AG04449 (cell line): ENCODE measurements at regions of chr14 and their contacts with region 1.

Region 1: DNA sequence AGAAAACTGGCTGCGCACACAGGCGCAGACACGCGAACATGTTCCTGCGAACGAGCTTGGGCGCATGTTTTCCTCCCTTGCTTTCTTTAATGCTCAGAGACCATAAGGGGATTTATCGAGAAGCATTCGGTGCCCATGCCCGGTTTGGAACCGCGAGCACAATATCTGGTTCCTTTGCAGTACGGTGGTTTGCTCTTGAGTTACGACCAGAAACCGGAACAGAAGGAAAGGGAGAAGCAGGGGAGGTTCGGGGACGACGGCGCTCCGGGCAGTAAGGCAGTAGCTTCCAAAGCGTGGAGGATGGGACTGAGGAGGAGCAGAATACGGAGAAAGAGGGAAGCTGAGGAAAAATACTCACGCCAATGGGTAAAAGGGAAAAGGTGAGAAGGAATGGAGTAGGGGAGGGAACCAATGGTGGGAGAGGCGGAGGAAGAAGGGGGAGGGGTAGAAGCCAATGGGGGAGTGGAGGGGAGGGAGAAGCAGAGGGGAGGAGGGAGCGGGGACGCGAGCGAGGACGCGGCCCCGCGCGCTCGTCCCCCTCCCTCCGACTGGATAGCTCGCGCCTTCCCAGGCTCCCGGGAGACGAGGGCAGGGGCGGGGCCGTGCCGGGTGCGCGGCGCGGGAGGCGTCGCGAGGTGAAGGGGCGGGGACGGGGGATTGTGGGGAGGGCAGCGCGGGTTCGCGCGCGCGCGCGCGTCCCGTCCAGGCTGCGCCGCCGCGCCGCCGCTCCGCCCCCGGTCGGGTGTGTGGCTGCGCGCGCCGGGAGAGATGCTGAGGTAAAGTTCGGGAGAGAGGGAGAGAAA is 625 bp upstream of the ARHGAP5 start:
- DNase-seq: peak; percentile 69
- H3K4me3 ChIP-seq: peak overlapping the region; percentile 89
- CTCF ChIP-seq: no peak

Region 2: DNA sequence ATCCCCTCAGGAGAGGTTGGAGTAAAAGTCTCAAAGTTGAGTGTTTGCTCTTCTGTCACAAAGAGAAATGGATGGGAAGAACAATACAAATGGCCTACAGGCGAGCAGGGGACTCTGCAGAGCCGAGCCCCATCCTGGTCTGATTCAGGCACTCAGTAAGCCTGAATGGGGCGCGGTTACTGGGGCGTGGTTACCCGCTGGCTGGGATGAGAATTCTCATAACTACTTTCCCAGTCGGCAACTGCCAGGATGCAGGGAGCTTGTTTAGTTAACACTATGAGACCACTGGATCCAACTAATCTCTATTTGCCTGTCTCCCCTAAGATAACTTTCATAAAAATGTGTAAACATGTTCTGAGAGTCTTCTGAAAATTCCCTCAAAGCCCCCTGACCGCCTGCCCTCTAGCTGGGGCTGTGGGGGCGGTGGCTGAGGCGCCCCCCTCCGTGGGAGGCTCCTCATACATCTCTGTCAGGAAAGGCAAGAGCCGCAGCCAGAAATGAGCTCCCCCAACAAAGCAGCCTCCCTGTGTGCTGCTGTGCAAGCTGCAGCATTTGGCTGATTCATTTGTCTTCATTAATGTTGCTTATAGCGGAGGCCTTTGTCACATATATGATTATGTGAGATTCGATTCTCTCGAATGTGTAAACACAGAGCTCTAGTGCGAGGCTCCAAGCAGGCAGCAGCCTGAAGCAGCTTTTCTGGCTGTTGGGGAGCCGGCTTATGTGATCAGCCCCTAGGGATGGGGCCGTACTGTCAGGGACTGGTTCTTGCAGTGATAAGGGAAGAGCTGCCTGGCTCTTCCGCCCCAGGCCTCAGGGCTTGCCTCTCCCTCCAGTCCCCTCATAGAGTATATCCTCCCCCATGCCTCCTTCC is 125.5 kb before region 1 on chr14:
- CTCF ChIA-PET with region 1: no interaction called
- POLR2A ChIA-PET with region 1: no interaction called
- DNase-seq: no peak
- H3K4me3 ChIP-seq: no peak overlapping the region
- CTCF ChIP-seq: no peak

Region 3: DNA sequence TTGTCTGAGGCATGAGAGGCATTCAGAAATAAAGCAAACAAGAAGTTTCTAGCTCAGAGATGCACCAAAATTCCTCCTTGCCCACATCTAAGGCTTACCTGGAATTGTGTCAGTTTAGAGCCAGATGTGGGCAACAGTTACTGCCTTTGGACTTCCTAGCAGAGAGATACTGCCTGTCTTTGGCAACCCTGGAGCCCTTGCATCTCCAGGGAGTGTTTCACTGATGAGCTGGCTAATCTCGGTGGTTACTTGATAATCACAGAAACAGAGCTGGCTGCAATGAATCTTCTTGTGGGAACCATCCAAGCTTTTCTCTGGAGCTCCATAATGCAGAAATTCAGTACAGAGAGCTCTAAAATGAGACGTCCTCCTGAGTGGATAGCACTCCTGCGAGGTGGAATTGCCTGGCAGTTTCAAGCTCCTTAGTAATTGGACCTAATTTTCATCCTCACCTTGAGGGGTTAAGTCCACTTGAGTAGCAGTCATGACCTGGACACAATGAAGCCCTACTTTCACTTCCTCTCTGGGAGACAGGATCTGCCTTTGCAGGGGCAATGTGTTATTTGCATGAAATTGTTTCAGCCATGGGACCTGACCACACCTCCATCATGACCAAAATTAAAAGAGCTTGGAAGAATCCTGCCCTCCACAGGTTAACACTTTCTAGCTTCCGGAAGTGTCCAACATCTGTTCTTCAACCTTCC is 108.2 kb before region 1 on chr14:
- CTCF ChIA-PET with region 1: no interaction called
- POLR2A ChIA-PET with region 1: no interaction called
- DNase-seq: no peak
- H3K4me3 ChIP-seq: no peak overlapping the region
- CTCF ChIP-seq: no peak

Region 4: GRCh38 chr14:32244404-32244803 is 167.9 kb after region 1 on chr14:
- CTCF ChIA-PET with region 1: interaction called, 236 read pairs
- POLR2A ChIA-PET with region 1: interaction called, 3 read pairs
- DNase-seq: no peak
- H3K4me3 ChIP-seq: no peak overlapping the region
- CTCF ChIP-seq: peak; percentile 37

Region 5: GRCh38 chr14:32469388-32470160 is 393.1 kb after region 1 on chr14:
- CTCF ChIA-PET with region 1: interaction called, 12 read pairs
- POLR2A ChIA-PET with region 1: interaction called, 4 read pairs
- DNase-seq: no peak
- H3K4me3 ChIP-seq: no peak overlapping the region
- CTCF ChIP-seq: peak; percentile 26